WTC11 (cell line): ENCODE measurements at regions of chr19 and their contacts with region 1.

Region 1: DNA sequence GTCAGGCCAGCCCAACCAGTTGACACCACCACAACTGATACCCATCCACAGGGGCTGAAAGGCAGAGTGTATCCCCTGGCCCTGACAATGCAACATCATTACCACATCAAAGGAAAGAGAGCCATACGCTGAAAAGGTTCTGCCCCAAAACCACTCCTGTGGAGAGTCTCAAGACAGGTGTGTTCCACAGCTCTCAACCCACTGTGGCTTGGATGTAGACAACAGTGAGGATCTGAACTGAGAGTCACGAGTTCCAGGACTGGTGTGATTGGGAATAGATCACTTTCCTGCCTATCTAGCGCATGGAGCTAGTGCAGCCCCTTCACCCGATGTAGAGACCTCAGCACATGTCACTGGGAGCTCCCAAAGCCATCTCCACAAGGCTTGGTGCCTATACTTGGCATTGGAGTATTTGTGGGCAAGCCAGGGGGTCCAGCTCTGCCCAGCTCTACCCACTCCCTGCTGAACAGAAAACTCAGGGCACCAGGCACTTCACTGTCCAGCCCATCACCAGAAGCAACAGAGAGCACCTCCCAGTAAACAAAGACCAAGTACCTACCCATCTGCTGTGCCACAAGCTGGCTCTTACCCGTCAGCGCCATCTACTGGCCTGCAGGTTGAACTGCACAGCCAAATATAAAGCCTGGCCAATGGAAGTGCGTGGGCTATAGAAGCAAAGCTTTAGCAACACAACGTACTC is 579.5 kb downstream of the UQCRFS1 start:
- DNase-seq: peak; percentile 73
- ATAC-seq: peak; percentile 90
- H3K4me3 Mint-ChIP-seq: no peak overlapping the region
- H3K27ac Mint-ChIP-seq: peak overlapping the region; percentile 8; the same call in 1 of the 2 replicates
- H3K4me1 Mint-ChIP-seq: peaks cover 8% of the 10 kb centered on the region
- H3K27me3 Mint-ChIP-seq: no peaks in the 10 kb centered on the region
- CTCF ChIP-seq: peak; percentile 97

Region 2: DNA sequence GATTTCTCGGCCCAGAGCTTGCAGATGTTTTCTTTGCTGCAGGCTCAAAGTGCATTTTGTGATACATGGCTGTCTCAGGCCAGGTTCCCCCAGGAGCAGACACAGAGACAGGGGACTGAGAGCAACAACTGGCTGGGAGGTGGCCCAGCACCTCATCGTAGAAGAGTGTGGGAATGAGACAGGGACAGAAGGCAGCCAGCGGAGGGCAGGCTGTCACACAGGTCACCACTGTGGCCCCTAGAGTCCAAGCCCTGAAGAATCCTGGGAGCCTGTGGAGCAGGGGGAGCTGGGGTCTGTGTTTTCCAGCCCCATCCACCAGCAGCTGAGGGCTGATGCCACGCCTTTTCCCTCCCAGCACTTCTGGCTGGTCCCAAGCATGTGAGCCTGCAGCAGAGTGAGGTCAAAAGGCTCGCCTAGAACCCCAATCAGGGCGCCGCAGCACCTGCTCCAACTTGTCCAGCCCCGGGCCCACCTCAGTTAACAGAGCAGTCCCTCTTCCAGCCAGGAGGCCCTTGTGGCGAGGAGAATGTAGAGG is 144.3 kb before region 1 on chr19:
- CTCF ChIA-PET with region 1: interaction called, 16 read pairs
- POLR2A ChIA-PET with region 1: no interaction called
- DNase-seq: no peak
- ATAC-seq: peak; percentile 59
- H3K4me3 Mint-ChIP-seq: no peak overlapping the region
- H3K27ac Mint-ChIP-seq: peak overlapping the region; percentile 69
- H3K4me1 Mint-ChIP-seq: peaks cover 54% of the 10 kb centered on the region
- H3K27me3 Mint-ChIP-seq: no peaks in the 10 kb centered on the region
- CTCF ChIP-seq: no peak

Region 3: DNA sequence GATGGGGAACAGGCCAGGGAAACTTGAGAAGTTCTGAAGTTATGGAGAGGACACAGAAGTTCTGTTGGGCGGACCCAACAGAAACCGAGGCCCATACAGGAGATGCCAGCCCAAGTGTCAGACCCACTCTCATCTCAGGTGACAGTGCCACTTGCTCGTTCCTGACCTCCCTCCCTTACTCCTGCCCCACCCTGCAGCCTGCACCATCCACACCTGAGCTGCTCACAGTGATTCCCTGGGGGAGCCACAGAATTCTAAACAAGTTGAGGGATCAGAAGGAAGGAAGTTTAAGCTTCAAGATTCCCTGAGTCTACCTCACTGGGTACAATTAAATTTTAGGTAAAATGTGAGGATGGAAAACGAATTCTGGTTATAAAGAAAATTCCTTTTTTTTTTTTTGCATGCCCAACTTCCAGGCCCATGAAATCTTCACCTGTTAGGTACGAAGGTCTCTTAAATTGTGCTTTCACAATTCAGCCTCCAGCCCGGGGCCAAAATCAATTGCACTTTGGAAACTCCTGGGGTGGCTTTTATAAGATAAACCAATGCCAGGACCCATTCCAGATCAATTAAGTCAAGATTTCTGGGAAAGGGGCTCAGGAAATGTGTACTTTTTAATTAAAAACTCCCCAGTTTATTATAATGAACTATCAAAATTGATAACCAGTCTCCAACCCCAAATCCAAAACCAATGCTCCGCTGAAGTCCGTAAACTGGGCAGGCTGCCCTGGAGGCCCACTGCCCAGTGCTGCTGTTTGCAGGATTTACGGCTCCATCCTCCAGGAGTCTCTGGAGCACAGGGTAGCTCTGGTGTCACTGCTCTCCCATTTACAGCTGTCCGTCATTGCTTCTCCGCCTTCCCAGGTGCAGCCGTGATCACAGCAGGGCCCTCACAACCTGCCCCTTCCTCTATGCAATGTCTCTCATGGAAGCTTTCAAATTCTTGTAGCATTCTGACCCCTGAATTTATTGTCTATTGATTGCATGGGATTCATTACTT is 64.0 kb before region 1 on chr19:
- CTCF ChIA-PET with region 1: interaction called, 10 read pairs
- POLR2A ChIA-PET with region 1: no interaction called
- DNase-seq: peak; percentile 32
- ATAC-seq: peak; percentile 78
- H3K4me3 Mint-ChIP-seq: no peak overlapping the region
- H3K27ac Mint-ChIP-seq: no peak overlapping the region
- H3K4me1 Mint-ChIP-seq: peaks cover 22% of the 10 kb centered on the region
- H3K27me3 Mint-ChIP-seq: no peaks in the 10 kb centered on the region
- CTCF ChIP-seq: no peak

Region 4: DNA sequence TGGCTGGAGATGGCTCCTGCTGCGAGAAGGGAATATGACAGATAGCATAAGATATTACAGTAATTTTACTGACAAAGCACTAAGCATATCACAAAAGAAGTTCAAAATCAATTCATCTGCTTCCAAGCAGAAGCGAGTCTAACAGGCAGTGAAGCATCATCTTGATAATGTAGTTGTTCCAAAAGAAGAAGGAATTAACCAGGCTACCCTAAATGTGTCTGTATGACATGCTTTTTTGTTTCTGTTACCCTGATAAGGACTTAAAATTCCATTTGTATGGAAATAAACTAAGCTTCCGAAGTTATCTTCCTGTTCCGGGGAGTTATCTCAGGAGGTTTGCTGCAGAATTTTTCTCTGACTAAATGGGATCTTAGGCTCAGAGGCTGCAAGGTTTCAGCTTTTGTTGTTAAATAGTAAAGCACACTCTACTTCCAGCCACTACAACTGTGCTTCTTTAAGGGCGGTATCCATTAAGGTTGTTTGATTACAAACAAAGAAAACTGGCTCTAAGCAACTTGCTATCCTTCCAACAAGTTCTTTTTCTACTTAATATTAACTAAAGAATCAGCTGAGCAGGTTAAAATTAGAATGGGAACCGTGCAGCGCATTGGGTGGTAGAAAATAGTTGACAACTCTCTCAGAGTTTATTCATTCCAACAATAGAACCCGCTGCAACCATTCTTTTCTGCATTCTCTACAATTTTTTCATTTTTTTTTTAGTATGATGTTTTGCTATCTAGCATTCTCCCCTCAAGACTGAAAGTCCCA is 27.8 kb before region 1 on chr19:
- CTCF ChIA-PET with region 1: no interaction called
- POLR2A ChIA-PET with region 1: no interaction called
- DNase-seq: no peak
- ATAC-seq: no peak
- H3K4me3 Mint-ChIP-seq: no peak overlapping the region
- H3K27ac Mint-ChIP-seq: no peak overlapping the region
- H3K4me1 Mint-ChIP-seq: no peaks in the 10 kb centered on the region
- H3K27me3 Mint-ChIP-seq: no peaks in the 10 kb centered on the region
- CTCF ChIP-seq: no peak

Region 5: GRCh38 chr19:28619816-28620429 is 13.5 kb before region 1 on chr19:
- CTCF ChIA-PET with region 1: interaction called, 13 read pairs
- POLR2A ChIA-PET with region 1: no interaction called
- DNase-seq: no peak
- ATAC-seq: no peak
- H3K4me3 Mint-ChIP-seq: no peak overlapping the region
- H3K27ac Mint-ChIP-seq: no peak overlapping the region
- H3K4me1 Mint-ChIP-seq: no peaks in the 10 kb centered on the region
- H3K27me3 Mint-ChIP-seq: no peaks in the 10 kb centered on the region
- CTCF ChIP-seq: no peak

Region 6: DNA sequence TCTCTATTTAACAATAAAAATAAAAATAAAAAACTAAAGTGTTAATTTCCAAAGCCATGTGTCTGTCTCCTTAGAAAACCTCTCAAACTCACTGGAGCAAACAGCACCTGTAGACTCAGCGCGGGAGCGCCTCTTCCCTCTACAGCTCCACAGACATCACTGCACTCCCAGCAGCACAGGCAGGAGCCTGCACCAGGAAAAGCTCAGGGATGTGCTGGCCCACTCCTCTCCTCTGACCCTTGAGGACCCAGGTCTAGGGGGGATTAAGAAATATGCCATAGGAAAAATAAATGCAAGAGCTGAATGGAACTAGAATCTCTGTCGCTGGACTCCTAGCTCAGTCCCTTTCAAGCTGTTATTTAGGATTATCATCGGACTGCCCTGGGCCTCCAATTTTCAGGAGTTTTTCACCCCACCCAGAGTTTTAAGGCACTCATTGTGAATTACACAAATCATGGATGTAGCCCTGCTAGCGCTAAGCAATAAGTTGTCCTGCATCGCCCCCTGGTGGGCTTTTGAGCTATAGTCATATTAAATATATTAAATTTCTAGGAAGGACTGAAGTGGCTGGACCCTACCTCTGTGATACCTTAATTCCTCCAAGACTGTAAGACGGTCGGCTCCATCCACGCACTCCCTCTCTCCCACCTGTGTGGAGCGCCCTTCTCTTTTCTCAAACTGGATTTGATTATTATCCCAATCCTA is 245.5 kb after region 1 on chr19:
- CTCF ChIA-PET with region 1: interaction called, 22 read pairs
- POLR2A ChIA-PET with region 1: no interaction called
- DNase-seq: peak; percentile 76
- ATAC-seq: peak; percentile 62
- H3K4me3 Mint-ChIP-seq: no peak overlapping the region
- H3K27ac Mint-ChIP-seq: no peak overlapping the region
- H3K4me1 Mint-ChIP-seq: peaks cover 52% of the 10 kb centered on the region
- H3K27me3 Mint-ChIP-seq: peaks cover 19% of the 10 kb centered on the region
- CTCF ChIP-seq: peak; percentile 82